ENCODE measurements at regions of chr6 and their contacts with region 1.

Region 1: DNA sequence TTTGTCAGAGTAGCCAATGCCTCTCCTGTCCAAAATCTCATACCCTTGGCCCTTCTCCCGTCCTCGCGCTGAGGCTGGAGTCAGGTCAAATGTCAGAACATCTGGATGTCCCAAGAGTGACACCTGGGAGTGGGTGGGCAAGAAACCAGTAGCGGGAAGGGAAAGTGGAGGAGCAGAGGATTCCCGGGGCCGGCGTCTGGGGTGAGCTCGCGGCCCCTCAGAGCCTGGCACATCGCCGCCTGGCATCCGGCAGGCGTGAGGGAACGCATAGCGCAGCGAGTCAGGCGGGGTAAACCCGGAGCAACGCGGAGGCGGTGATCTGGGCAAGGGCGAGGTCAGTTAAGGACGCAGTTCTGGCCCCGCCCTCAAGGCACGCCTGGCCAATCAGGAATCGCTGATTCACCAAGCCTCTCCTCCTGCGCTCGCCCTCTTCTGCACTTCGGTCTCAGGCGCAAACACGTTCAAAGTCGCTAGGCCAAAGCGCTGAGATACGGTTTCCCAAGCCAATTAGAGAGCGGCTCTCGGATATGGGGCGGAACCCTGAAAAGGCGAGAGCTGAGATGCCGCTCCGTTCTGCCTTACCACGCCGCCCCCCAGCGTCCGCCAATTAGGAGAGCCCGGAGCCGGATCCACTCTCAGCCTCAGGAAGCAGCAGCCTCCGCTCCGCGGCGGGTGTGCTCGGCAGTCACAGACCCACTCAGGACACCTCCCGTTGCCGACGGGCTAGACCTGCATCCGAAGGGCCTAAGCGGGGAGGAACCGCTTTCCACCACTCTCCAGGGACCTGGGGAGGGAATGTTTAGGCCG is 22.5 kb downstream of the VPS52 start:
- DNase-seq: peak; percentile 98
- H3K4me3 Mint-ChIP-seq: peak overlapping the region; percentile 74
- H3K27ac Mint-ChIP-seq: peak overlapping the region; percentile 87
- H3K4me1 Mint-ChIP-seq: peaks cover 46% of the 10 kb centered on the region
- H3K27me3 Mint-ChIP-seq: no peaks in the 10 kb centered on the region

Region 2: DNA sequence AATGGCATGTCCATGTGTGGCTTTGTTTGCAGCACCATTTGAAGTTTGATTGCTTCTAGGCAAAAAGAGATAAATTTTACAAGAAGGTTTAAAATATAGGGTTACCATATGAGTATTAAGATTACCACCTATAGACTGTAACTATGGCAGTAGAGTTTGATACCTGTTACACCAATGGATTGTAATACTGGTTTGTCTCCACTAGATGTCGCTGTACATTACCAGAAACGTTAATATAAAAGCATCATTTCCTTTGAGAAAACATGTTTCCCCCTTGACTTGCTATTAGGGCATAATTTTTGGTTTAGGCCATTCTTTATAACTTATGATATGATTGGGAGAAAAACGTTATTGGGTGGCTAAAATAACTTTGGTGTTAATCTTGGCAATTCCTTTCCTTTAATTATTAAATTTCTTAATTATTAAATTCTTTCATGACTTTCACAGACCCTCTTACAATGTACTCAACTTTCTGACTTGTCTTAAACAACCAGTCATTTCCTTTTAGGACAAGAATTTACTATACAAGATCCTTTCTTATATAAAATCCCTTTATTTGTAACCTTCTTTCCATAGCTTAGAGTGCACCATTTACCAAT is 130.5 kb before region 1 on chr6:
- CTCF ChIA-PET with region 1: interaction called, 62 read pairs
- POLR2A ChIA-PET with region 1: interaction called, 13 read pairs
- DNase-seq: no peak
- H3K4me3 Mint-ChIP-seq: no peak overlapping the region
- H3K27ac Mint-ChIP-seq: no peak overlapping the region
- H3K4me1 Mint-ChIP-seq: peaks cover 10% of the 10 kb centered on the region
- H3K27me3 Mint-ChIP-seq: peaks cover 70% of the 10 kb centered on the region

Region 3: GRCh38 chr6:33161354-33162331 is 87.5 kb before region 1 on chr6:
- CTCF ChIA-PET with region 1: interaction called, 34 read pairs
- POLR2A ChIA-PET with region 1: interaction called, 9 read pairs
- DNase-seq: peak; percentile 86
- H3K4me3 Mint-ChIP-seq: peak overlapping the region; percentile 79
- H3K27ac Mint-ChIP-seq: peak overlapping the region; percentile 69
- H3K4me1 Mint-ChIP-seq: peaks cover 17% of the 10 kb centered on the region
- H3K27me3 Mint-ChIP-seq: peaks cover 8% of the 10 kb centered on the region

Region 4: DNA sequence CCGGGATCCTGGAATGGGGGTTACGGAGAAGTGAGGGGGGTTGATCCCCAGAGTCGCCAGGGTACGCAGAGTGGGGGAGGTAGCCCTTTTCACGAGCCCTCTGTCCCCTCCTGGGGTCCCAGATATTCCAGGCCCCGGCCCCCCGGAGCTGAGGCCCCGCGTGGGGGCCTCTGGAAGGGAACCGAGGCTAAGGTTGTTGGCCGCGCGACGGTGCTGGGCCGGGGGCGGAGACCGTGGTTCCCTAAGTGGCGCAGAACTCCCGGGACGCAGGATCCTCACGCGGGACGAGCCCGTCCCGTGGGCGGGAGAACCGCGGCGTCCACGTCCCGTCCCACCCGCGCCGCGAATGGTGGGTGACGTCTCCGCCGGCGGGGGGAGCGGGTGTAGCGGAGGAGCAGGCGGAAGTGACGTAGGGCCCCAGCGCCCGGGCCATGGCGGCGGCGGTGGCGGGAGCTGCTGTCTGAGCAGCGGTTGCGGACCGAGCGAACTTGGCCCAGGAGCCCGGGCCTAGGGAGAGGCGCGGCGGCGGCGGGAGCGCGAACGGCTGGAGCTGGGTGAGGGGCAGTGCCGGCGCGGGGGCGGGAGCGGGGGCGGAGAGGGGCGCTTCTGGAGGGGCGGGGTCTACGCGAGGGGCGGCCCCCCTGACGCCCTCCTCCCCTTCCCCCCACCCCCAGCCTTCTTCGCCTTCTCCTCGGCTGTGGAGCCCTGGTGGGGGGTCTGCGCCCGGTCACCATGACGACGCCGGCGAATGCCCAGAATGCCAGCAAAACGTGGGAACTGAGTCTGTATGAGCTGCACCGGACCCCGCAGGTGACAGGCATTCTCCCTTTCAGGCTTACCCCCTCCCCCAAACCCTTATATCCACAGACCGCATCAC is 40.8 kb before region 1 on chr6 and contains the start of gene RING1:
- CTCF ChIA-PET with region 1: interaction called, 19 read pairs
- POLR2A ChIA-PET with region 1: interaction called, 34 read pairs
- DNase-seq: peak; percentile 88
- H3K4me3 Mint-ChIP-seq: peak within 1 kb of the TSS; percentile 80
- H3K27ac Mint-ChIP-seq: peak within 1 kb of the TSS; percentile 79
- H3K4me1 Mint-ChIP-seq: peaks cover 56% of the 10 kb centered on the region
- H3K27me3 Mint-ChIP-seq: peaks cover 10% of the 10 kb centered on the region
- total RNA-seq, gene RING1: 29.7 to 32.1 TPM

Region 5: DNA sequence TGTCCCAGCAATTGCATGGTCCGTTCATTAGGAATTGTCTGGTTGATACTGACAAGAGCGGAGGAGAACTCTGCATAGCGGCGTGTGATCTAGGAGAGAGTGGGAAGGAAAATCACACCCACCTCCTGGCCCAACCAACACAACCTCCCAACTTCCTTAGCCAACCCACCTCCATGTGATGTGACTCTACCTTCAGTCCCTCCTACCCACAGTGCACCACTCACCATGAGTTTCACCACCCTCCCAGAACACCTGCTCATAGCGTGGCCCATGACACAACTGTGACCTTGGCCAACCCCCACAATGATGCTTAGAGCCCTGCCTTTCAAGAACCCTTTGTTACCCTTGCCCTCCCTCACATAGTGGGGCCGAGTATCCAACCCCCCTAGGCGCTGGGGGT is 14.9 kb after region 1 on chr6:
- CTCF ChIA-PET with region 1: interaction called, 13 read pairs
- POLR2A ChIA-PET with region 1: interaction called, 4 read pairs
- DNase-seq: no peak
- H3K4me3 Mint-ChIP-seq: no peak overlapping the region
- H3K27ac Mint-ChIP-seq: no peak overlapping the region
- H3K4me1 Mint-ChIP-seq: peaks cover 11% of the 10 kb centered on the region
- H3K27me3 Mint-ChIP-seq: no peaks in the 10 kb centered on the region

Region 6: DNA sequence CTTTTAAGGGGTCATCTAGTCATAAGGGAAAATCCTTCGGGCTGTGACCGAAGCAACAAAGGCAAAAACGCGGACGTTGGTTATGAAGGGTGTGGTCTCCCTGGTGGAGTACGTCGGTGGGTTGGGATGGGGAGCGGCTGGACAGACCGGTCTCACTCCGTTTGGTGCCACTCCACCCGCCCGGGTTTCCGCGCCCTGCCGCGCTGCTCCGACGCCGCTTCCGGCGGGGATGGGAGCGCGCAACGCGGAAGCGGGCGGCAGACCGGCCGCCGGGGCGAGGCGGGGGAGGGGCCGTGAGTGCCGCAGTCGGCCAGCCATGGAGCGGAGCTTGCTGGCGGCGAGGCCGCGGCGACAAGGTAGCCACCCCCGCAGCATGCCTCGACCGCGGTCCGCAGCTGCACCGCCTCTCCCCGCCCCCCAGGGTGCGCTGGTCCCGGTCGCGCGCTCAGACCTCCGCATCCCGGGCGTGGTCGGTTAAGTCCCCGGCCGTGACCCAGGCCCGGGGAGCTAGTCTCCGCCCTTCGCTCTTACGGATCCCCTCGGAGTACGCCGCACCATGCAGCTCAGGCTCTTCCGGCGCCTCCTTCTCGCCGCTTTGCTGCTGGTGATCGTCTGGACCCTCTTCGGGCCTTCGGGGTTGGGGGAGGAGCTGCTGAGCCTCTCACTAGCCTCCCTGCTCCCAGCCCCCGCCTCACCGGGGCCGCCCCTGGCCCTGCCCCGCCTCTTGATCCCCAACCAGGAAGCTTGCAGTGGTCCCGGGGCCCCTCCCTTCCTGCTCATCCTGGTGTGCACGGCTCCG is 27.9 kb after region 1 on chr6 and contains the start of gene B3GALT4:
- CTCF ChIA-PET with region 1: interaction called, 27 read pairs
- POLR2A ChIA-PET with region 1: interaction called, 71 read pairs
- DNase-seq: peak; percentile 79
- H3K4me3 Mint-ChIP-seq: peak within 1 kb of the TSS; percentile 92
- H3K27ac Mint-ChIP-seq: peak within 1 kb of the TSS; percentile 98
- H3K4me1 Mint-ChIP-seq: peaks cover 70% of the 10 kb centered on the region
- H3K27me3 Mint-ChIP-seq: no peaks in the 10 kb centered on the region
- total RNA-seq, gene B3GALT4: 25.2 to 26.5 TPM

Region 7: GRCh38 chr6:33299237-33299944 is 50.3 kb after region 1 on chr6:
- CTCF ChIA-PET with region 1: interaction called, 5 read pairs
- POLR2A ChIA-PET with region 1: interaction called, 12 read pairs
- DNase-seq: peak; percentile 94
- H3K4me3 Mint-ChIP-seq: peak overlapping the region; percentile 95
- H3K27ac Mint-ChIP-seq: peak overlapping the region; percentile 100
- H3K4me1 Mint-ChIP-seq: peaks cover 41% of the 10 kb centered on the region
- H3K27me3 Mint-ChIP-seq: no peaks in the 10 kb centered on the region